Caco-2 (cell line): ENCODE measurements at regions of chr16 and their contacts with region 1.

Region 1: DNA sequence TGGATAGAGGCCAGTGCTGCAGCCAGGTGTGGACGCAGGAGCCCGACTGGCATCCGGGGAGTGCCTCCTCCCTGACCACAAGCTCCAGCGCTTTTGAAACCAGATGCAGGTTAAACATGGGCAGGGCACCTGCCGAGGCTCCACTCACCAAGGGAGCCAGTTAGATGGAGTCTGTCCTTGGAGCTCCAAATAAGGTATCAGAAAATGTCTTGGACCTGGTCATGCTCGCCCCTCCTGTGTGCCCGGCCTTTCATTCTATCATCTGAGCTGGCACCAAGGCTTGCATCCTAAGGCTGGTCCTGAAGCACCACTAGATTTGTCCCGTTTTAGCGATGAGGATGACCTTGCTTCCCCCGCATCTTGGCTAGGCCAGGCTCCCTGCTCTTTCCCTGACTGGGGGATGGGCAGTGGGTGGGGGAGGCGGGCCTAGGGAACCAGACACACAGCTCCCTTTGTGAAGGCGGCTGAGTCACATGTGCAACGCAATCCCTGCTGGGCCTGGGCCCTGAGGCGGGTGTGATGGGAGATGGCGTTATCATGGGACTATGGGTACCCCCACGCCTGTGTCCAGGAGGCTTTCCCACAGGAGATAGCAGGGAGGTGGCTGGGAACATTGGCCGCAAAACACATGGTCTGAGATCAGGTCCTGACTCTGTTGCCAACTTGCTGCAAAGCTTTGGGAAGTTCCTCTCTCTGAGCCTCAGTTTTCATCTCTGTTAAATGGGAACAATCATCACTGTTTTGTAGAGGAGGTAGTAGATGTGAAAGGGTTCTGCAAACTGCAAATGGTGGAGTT is 5.0 kb upstream of the ADGRG1 start:
- DNase-seq: no peak
- H3K4me3 ChIP-seq: no peak overlapping the region
- H3K4me3 Mint-ChIP-seq: no peak overlapping the region
- H3K27ac Mint-ChIP-seq: no peak overlapping the region
- H3K4me1 ChIP-seq: peaks cover 48% of the 10 kb centered on the region
- H3K4me1 Mint-ChIP-seq: peaks cover 44% of the 10 kb centered on the region
- H3K27me3 ChIP-seq: no peaks in the 10 kb centered on the region
- H3K27me3 Mint-ChIP-seq: no peaks in the 10 kb centered on the region
- CTCF ChIP-seq: no peak

Region 2: DNA sequence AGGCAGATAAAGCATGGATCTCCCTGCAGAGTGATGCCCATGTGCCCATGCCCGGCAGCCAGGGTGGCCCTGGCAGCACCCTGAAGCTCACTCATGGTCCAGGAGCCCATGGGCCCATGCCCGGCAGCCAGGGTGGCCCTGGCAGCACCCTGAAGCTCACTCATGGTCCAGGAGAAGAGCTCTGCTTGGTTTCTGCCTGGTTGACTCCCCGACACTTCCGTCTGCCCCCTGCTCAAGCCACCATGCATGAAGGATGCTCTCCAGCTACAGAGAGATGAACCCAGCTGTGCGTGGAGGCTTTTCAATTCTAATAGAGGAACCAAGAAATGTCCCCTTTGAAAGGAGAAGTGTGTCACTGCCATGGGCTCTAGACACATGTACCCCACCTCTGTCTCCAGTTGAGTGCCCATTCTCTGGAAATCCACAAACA is 210.1 kb before region 1 on chr16:
- CTCF ChIA-PET with region 1: no interaction called
- POLR2A ChIA-PET with region 1: no interaction called
- intact Hi-C with region 1: no loop called
- DNase-seq: no peak
- H3K4me3 ChIP-seq: no peak overlapping the region
- H3K4me3 Mint-ChIP-seq: no peak overlapping the region
- H3K27ac Mint-ChIP-seq: no peak overlapping the region
- H3K4me1 ChIP-seq: peaks cover 26% of the 10 kb centered on the region
- H3K4me1 Mint-ChIP-seq: peaks cover 20% of the 10 kb centered on the region
- H3K27me3 ChIP-seq: no peaks in the 10 kb centered on the region
- H3K27me3 Mint-ChIP-seq: no peaks in the 10 kb centered on the region
- CTCF ChIP-seq: no peak

Region 3: DNA sequence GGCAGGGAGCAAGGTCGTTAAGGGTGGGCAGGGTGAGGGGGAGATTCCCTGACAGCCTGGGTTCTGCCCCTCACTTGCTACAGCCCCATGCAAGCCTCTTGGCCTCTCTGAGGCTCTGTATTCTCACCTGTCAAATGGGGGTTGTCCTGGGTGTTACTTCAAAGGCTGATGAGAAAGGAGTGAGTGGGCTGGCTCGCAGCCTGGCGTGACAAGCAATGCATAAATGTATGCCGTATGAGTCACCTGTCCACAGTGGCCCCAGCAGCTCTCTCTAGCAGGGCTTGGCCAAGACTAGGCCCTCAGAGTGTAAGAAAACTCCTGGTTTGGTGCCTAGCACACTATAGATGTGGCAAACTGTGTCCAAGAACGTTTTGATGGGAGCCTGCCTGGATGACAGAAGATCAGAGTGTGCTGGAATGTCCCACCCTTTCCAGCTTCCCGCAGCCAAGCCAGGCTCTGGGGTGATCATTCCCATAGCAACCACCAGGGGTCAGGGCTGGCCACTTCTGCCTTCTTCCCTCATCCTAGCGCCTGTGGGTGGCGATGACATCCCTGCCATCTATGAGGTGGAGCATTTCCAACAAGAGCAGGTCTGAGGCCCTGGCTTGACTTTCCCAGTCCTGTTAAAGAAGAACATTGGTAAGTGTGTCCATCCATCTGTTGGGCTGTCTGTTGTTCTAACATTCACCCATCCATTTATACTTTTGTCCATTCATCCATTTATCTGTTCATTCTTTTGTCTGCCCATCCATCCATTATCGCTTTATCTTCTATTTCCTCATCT is 32.2 kb before region 1 on chr16:
- CTCF ChIA-PET with region 1: interaction called, 12 read pairs
- POLR2A ChIA-PET with region 1: no interaction called
- intact Hi-C with region 1: no loop called
- DNase-seq: peak; percentile 78 to 89
- H3K4me3 ChIP-seq: no peak overlapping the region
- H3K4me3 Mint-ChIP-seq: no peak overlapping the region
- H3K27ac Mint-ChIP-seq: peak overlapping the region; percentile 29
- H3K4me1 ChIP-seq: peaks cover 10% of the 10 kb centered on the region
- H3K4me1 Mint-ChIP-seq: peaks cover 8% of the 10 kb centered on the region
- H3K27me3 ChIP-seq: no peaks in the 10 kb centered on the region
- H3K27me3 Mint-ChIP-seq: no peaks in the 10 kb centered on the region
- CTCF ChIP-seq: peak; percentile 97

Region 4: DNA sequence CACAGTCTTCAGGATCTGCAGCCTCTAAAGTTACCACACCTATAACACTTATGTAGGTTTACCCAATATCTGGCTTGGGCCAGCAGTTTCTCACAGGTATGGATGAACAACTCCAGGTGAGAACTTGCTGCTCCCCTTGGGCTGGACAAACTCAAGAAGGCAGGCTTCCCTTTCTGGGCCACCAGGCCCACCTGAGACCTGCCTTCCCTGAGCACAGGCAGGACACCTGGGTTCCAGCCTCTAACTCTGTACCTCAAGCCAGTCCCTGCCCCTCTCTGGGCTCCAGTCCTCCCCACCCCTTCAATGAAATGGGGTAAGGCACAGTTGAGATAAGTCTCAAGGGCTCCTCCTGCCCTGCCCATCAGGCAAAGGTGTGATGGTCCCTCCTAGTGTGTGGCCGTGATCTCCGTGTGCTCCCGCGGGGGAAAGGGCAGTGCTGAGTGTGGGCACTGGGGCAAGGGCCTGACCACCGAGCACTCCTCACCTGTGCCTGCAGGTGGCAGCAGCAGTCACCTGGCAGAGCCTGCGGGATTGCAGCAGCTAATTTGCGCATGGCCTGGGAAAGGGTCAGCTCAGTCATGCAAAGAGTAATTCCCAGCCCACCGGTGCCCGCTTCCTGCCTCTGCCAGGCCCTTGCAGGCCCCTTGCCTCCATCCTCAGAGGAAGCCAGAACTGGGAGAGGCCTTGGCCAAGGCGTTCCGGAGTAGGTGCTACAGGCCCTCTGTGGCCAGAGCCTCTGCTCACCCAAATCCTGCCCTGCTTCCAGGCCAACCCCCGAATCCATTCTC is 23.2 kb before region 1 on chr16:
- CTCF ChIA-PET with region 1: interaction called, 15 read pairs
- POLR2A ChIA-PET with region 1: interaction called, 4 read pairs
- intact Hi-C with region 1: loop called (anchors 2 kb)
- DNase-seq: peak; percentile 84 to 88
- H3K4me3 ChIP-seq: no peak overlapping the region
- H3K4me3 Mint-ChIP-seq: no peak overlapping the region
- H3K27ac Mint-ChIP-seq: no peak overlapping the region
- H3K4me1 ChIP-seq: peaks cover 3% of the 10 kb centered on the region; the same call in 1 of the 2 replicates
- H3K4me1 Mint-ChIP-seq: no peaks in the 10 kb centered on the region
- H3K27me3 ChIP-seq: no peaks in the 10 kb centered on the region
- H3K27me3 Mint-ChIP-seq: no peaks in the 10 kb centered on the region
- CTCF ChIP-seq: peak; percentile 92 to 98

Region 5: GRCh38 chr16:57606847-57607501 is 16.5 kb before region 1 on chr16:
- CTCF ChIA-PET with region 1: interaction called, 8 read pairs
- POLR2A ChIA-PET with region 1: interaction called, 8 read pairs
- intact Hi-C with region 1: loop called (anchors 1 kb)
- DNase-seq: peak; percentile 87 to 90
- H3K4me3 ChIP-seq: peak overlapping the region; percentile 28
- H3K4me3 Mint-ChIP-seq: peak overlapping the region; percentile 47
- H3K27ac Mint-ChIP-seq: peak overlapping the region; percentile 82
- H3K4me1 ChIP-seq: peaks cover 34% of the 10 kb centered on the region
- H3K4me1 Mint-ChIP-seq: peaks cover 6% of the 10 kb centered on the region
- H3K27me3 ChIP-seq: no peaks in the 10 kb centered on the region
- H3K27me3 Mint-ChIP-seq: no peaks in the 10 kb centered on the region
- CTCF ChIP-seq: no peak

Region 6: GRCh38 chr16:57637424-57637823 is 14.0 kb after region 1 on chr16:
- CTCF ChIA-PET with region 1: interaction called, 4 read pairs
- POLR2A ChIA-PET with region 1: interaction called, 5 read pairs
- intact Hi-C with region 1: loop called (anchors 1 kb)
- DNase-seq: no peak
- H3K4me3 ChIP-seq: no peak overlapping the region
- H3K4me3 Mint-ChIP-seq: no peak overlapping the region
- H3K27ac Mint-ChIP-seq: no peak overlapping the region
- H3K4me1 ChIP-seq: peaks cover 18% of the 10 kb centered on the region
- H3K4me1 Mint-ChIP-seq: peaks cover 11% of the 10 kb centered on the region
- H3K27me3 ChIP-seq: no peaks in the 10 kb centered on the region
- H3K27me3 Mint-ChIP-seq: no peaks in the 10 kb centered on the region
- CTCF ChIP-seq: no peak

Region 7: GRCh38 chr16:57648590-57649442 is 25.4 kb after region 1 on chr16:
- CTCF ChIA-PET with region 1: interaction called, 3 read pairs
- POLR2A ChIA-PET with region 1: no interaction called
- intact Hi-C with region 1: loop called (anchors 1 kb)
- DNase-seq: peak; percentile 85 to 93
- H3K4me3 ChIP-seq: no peak overlapping the region
- H3K4me3 Mint-ChIP-seq: no peak overlapping the region
- H3K27ac Mint-ChIP-seq: no peak overlapping the region
- H3K4me1 ChIP-seq: peaks cover 10% of the 10 kb centered on the region; the same call in 1 of the 2 replicates
- H3K4me1 Mint-ChIP-seq: peaks cover 14% of the 10 kb centered on the region
- H3K27me3 ChIP-seq: no peaks in the 10 kb centered on the region
- H3K27me3 Mint-ChIP-seq: no peaks in the 10 kb centered on the region
- CTCF ChIP-seq: peak; percentile 100

Region 8: DNA sequence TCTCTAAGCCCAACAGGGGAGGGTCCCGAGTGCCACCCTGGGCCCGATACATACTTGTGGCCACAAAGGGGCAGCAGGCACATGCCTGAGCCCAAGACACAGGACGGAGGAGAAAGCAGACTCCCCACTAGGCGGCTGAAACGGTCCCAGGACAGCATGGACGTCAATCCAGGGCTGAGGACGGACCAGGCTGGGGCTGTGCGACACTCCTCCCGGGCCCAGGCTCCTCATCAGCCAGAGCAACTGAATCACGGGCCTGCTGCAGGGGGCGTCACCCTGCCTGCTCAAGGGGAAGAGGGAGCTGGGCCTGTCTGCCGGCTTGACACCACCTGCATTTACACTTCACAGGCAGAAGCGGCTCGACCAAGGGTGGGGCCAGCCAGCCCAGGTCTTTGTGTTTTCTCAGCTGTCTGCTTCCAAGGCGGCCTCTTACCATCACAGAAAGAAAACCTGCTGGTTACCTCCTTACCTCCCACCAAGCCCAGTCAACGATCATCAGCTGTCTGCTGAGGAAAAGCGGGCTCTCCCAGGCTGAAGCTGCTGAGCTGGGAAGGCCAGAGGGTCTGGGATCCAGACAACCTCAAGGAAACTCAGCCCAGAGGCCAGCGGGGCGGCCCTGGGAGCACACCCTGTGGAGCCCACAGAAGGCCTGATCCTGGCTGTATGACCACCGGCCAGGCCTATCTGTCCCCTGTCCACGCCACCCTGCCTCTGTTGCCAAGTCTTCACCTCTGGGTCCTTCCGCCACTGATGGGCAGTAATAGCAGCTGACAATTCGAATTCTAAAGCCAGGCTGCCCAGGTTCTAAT is 152.4 kb after region 1 on chr16:
- CTCF ChIA-PET with region 1: no interaction called
- POLR2A ChIA-PET with region 1: no interaction called
- intact Hi-C with region 1: no loop called
- DNase-seq: peak; percentile 70 to 73
- H3K4me3 ChIP-seq: no peak overlapping the region
- H3K4me3 Mint-ChIP-seq: no peak overlapping the region
- H3K27ac Mint-ChIP-seq: peak overlapping the region; percentile 46
- H3K4me1 ChIP-seq: no peaks in the 10 kb centered on the region
- H3K4me1 Mint-ChIP-seq: no peaks in the 10 kb centered on the region
- H3K27me3 ChIP-seq: no peaks in the 10 kb centered on the region
- H3K27me3 Mint-ChIP-seq: no peaks in the 10 kb centered on the region
- CTCF ChIP-seq: peak; percentile 40 to 77

Region 9: GRCh38 chr16:57786632-57787518 is 163.4 kb after region 1 on chr16:
- CTCF ChIA-PET with region 1: no interaction called
- POLR2A ChIA-PET with region 1: interaction called, 13 read pairs
- intact Hi-C with region 1: no loop called
- DNase-seq: no peak
- H3K4me3 ChIP-seq: no peak overlapping the region
- H3K4me3 Mint-ChIP-seq: no peak overlapping the region
- H3K27ac Mint-ChIP-seq: no peak overlapping the region
- H3K4me1 ChIP-seq: peaks cover 19% of the 10 kb centered on the region; the same call in 1 of the 2 replicates
- H3K4me1 Mint-ChIP-seq: peaks cover 7% of the 10 kb centered on the region
- H3K27me3 ChIP-seq: no peaks in the 10 kb centered on the region
- H3K27me3 Mint-ChIP-seq: no peaks in the 10 kb centered on the region
- CTCF ChIP-seq: no peak

Region 10: GRCh38 chr16:57889960-57890751 is 266.7 kb after region 1 on chr16:
- CTCF ChIA-PET with region 1: no interaction called
- POLR2A ChIA-PET with region 1: no interaction called
- intact Hi-C with region 1: no loop called
- DNase-seq: no peak
- H3K4me3 ChIP-seq: no peak overlapping the region
- H3K4me3 Mint-ChIP-seq: no peak overlapping the region
- H3K27ac Mint-ChIP-seq: no peak overlapping the region
- H3K4me1 ChIP-seq: peaks cover 27% of the 10 kb centered on the region
- H3K4me1 Mint-ChIP-seq: peaks cover 29% of the 10 kb centered on the region
- H3K27me3 ChIP-seq: no peaks in the 10 kb centered on the region
- H3K27me3 Mint-ChIP-seq: no peaks in the 10 kb centered on the region
- CTCF ChIP-seq: no peak